ENCODE measurements at regions of chr11 and their contacts with region 1.

Region 1: GRCh38 chr11:112280268-112281126 is 19.8 kb upstream of the PLET1 start:
- DNase-seq: peak; percentile 91
- ATAC-seq: peak; percentile 89
- H3K4me3 ChIP-seq: peak overlapping the region; percentile 72
- H3K27ac ChIP-seq: no peak overlapping the region
- H3K4me1 ChIP-seq: 0 out of 2 replicates have a peak, but pooled peaks cover 4% of the 10 kb centered on the region
- H3K27me3 ChIP-seq: no peaks in the 10 kb centered on the region
- CTCF ChIP-seq: peak; percentile 93

Region 2: GRCh38 chr11:111531687-111532364 is 748.7 kb before region 1 on chr11:
- CTCF ChIA-PET with region 1: interaction called, 10 read pairs
- POLR2A ChIA-PET with region 1: no interaction called
- intact Hi-C with region 1: no loop called
- DNase-seq: peak; percentile 95
- ATAC-seq: peak; percentile 93
- H3K4me3 ChIP-seq: 0 out of 2 replicates have a peak overlapping the region, but pooled peaks have one; percentile 10
- H3K27ac ChIP-seq: peak overlapping the region; percentile 76
- H3K4me1 ChIP-seq: peaks cover 61% of the 10 kb centered on the region
- H3K27me3 ChIP-seq: no peaks in the 10 kb centered on the region
- CTCF ChIP-seq: no peak

Region 3: DNA sequence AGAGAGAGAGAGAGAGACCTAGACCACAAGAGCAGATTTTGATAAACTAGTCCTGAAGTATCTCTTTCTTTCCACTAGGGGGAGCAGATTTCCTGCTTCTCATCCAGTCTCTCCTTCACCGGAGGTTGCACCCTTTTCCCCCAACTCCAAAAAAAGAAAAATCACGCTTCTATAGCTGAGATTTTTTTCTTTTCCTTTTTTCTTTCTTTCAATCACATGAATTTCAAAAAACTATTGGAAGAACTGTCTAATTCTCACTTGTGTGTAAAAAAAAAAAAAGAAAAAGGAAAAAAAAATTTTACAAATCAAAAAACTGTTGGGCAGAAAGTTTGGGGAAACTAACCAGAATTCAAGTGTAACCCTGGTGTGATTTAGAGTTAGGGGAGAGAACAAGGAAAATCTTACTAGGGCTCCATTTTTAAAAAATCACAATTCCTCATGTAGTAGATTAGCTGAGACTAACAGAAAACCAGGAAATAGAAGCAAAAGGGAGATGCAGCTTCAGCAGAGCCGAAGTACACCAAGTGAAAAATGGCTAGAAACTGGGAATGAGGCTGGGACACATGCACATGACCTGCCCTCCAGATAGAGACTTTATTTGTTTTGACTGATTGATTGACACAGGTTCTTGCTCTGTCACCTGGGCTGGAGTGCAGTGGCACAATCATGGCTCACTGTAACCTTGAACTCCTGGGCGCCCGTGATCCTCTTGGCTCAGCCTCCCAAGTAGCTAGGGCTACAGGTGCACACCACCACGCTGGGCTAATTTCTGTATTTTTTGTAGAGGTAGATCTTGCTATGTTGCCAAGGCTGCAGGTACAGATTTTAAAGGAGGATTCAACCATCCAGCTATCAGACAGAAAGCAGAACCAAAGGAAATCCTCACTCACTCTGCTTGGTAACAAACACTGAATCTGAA is 166.7 kb before region 1 on chr11:
- CTCF ChIA-PET with region 1: interaction called, 4 read pairs
- POLR2A ChIA-PET with region 1: no interaction called
- intact Hi-C with region 1: loop called (anchors 1 kb)
- DNase-seq: peak; percentile 79
- ATAC-seq: peak; percentile 79
- H3K4me3 ChIP-seq: no peak overlapping the region
- H3K27ac ChIP-seq: no peak overlapping the region
- H3K4me1 ChIP-seq: peaks cover 14% of the 10 kb centered on the region
- H3K27me3 ChIP-seq: no peaks in the 10 kb centered on the region
- CTCF ChIP-seq: peak; percentile 71

Region 4: GRCh38 chr11:112219476-112220232 is 60.8 kb before region 1 on chr11:
- CTCF ChIA-PET with region 1: interaction called, 60 read pairs
- POLR2A ChIA-PET with region 1: interaction called, 6 read pairs
- intact Hi-C with region 1: loop called (anchors 1 kb)
- DNase-seq: peak; percentile 88
- ATAC-seq: peak; percentile 85
- H3K4me3 ChIP-seq: no peak overlapping the region
- H3K27ac ChIP-seq: no peak overlapping the region
- H3K4me1 ChIP-seq: peaks cover 33% of the 10 kb centered on the region
- H3K27me3 ChIP-seq: no peaks in the 10 kb centered on the region
- CTCF ChIP-seq: peak; percentile 91

Region 5: GRCh38 chr11:112226062-112226830 is 54.3 kb before region 1 on chr11 and contains the start of gene PTS:
- CTCF ChIA-PET with region 1: interaction called, 60 read pairs
- POLR2A ChIA-PET with region 1: interaction called, 30 read pairs
- intact Hi-C with region 1: no loop called
- DNase-seq: peak; percentile 95
- ATAC-seq: peak; percentile 92
- H3K4me3 ChIP-seq: peak within 1 kb of the TSS; percentile 93
- H3K27ac ChIP-seq: peak within 1 kb of the TSS; percentile 81
- H3K4me1 ChIP-seq: peaks cover 36% of the 10 kb centered on the region
- H3K27me3 ChIP-seq: no peaks in the 10 kb centered on the region
- CTCF ChIP-seq: no peak
- total RNA-seq, gene PTS: 53.0 and 77.4 TPM in 2 replicates

Region 6: DNA sequence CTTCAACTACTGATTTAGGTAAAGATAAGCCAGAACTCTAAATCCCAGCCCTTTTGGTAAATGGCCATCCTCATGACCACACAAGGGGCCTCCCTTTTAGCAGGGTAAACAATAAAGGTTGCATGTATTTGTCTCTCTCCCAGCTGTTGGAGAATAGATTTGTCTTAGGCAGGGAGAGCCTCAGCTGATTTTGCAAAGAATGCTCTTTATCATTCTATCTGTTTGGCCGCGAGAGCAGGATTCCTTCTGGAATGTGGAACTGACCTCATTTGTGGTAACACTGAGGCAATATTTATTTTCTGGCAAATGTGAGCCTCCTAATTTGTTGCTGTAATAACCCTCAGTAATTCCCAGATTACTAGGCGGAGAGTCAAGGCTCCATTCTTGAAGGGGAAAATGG is 39.0 kb before region 1 on chr11:
- CTCF ChIA-PET with region 1: interaction called, 10 read pairs
- POLR2A ChIA-PET with region 1: no interaction called
- intact Hi-C with region 1: no loop called
- DNase-seq: peak; percentile 58
- ATAC-seq: peak; percentile 24; the same call in 1 of the 2 replicates
- H3K4me3 ChIP-seq: no peak overlapping the region
- H3K27ac ChIP-seq: no peak overlapping the region
- H3K4me1 ChIP-seq: peaks cover 1% of the 10 kb centered on the region
- H3K27me3 ChIP-seq: no peaks in the 10 kb centered on the region
- CTCF ChIP-seq: no peak

Region 7: GRCh38 chr11:112497826-112498225 is 217.3 kb after region 1 on chr11:
- CTCF ChIA-PET with region 1: no interaction called
- POLR2A ChIA-PET with region 1: no interaction called
- intact Hi-C with region 1: no loop called
- DNase-seq: no peak
- ATAC-seq: no peak
- H3K4me3 ChIP-seq: no peak overlapping the region
- H3K27ac ChIP-seq: no peak overlapping the region
- H3K4me1 ChIP-seq: no peaks in the 10 kb centered on the region
- H3K27me3 ChIP-seq: peaks cover 39% of the 10 kb centered on the region
- CTCF ChIP-seq: no peak

Measured in PC-3 (cell line).